ENCODE measurements at regions of chr3 and their contacts with region 1.

Region 1: GRCh38 chr3:194486540-194487288 is at the start of gene ATP13A3:
- DNase-seq: peak; percentile 94
- H3K4me3 Mint-ChIP-seq: peak within 1 kb of the TSS; percentile 80
- H3K27ac Mint-ChIP-seq: peak within 1 kb of the TSS; percentile 60
- H3K4me1 Mint-ChIP-seq: peaks cover 45% of the 10 kb centered on the region
- H3K27me3 Mint-ChIP-seq: no peaks in the 10 kb centered on the region
- CTCF ChIP-seq: no peak
- total RNA-seq, gene ATP13A3: 229 and 237 TPM in 2 replicates

Region 2: GRCh38 chr3:194521514-194522260 is 35.0 kb after region 1 on chr3:
- CTCF ChIA-PET with region 1: interaction called, 3 read pairs
- intact Hi-C with region 1: loop called (anchors 5 kb)
- DNase-seq: no peak
- H3K4me3 Mint-ChIP-seq: peak overlapping the region; percentile 37
- H3K27ac Mint-ChIP-seq: peak overlapping the region; percentile 78
- H3K4me1 Mint-ChIP-seq: peaks cover 78% of the 10 kb centered on the region
- H3K27me3 Mint-ChIP-seq: no peaks in the 10 kb centered on the region
- CTCF ChIP-seq: no peak